Psoas muscle (tissue), 8 donors: ENCODE measurements at regions of chr2 and their contacts with region 1.

Region 1: DNA sequence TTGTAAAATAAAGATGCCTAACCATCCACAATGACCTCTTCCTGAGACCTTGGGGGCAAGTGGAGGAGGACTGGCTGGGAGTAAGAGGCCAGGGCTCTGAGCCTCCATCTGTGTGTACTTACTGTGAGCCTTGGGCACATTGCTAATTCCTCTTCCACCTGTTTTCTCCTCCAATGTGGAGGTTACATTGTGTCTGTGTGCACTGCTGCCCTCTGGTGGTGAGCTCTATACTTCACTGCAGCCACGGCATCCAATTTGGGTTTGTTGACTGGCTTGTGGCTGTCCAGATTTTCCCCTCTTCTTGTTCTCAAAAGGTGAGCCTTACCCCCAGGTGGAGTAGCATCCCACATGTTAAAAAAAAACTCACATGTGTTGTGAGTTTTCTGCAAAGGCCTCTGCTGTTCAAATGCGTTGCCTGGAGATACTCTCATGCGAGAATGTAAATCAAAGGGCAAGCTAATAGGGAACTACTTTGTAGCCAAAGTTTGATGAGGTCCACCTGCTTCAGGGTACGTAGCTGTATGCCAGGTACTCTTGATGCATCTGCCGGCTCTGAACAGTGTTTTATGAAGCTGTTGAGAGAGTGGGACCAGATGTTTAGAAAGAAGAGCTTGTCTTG is 80.8 kb downstream of the APOB start:
- DNase-seq: peak; percentile 66 to 76
- ATAC-seq: peak; percentile 82 to 92 (median 90)
- H3K4me3 ChIP-seq: no peak overlapping the region
- H3K27ac ChIP-seq: no peak overlapping the region
- H3K4me1 ChIP-seq: peaks cover 10% of the 10 kb centered on the region
- H3K27me3 ChIP-seq: peaks cover 0 to 2% (median 0%) of the 10 kb centered on the region in 3 donors
- CTCF ChIP-seq: peak; percentile 87

Region 2: DNA sequence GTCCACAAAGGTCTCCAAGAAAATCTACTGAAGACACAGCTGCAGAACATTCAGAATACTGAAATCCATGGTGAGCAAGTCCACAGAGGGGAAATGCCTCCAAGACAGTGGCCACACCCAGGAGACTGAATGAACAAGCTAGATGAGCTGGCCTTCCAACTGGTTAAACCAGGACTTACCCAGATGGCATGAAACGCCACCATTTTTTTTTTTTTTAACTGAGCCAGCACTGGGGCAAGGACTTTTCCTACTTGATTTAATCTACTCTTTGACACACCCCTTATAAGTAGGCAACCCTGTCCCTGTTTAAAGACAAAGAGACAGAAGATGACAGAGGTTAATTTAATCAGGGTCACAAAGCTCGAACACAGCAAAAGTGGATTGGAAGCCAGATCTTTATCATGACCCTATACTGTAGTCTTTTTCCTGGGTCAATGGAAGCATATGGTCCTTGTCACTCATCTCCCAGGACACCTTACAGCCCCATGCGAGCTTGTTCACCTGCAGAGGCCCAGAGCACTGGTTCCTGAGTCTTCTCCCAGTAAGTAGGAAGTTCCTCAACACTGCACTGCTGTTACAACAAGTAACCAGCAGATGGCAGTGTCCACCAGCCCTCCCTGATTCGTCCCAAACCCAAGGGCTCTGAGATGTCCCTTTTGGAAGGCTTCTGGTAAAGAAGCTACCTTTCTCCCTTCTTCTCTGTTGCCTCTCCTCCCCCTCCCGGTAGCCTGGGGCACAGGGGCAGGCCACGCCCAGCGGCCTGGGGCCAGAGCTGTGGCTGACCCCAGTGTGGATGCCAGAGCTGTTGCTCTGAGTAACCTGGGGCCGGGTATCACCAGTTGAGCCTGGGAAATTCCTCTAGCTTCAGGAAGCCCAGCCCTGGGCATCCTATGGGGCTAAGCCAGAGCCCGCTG is 301.7 kb before region 1 on chr2:
- intact Hi-C with region 1: loop called (anchors 1 to 2 kb)
- DNase-seq: peak; percentile 65 to 76
- ATAC-seq: peak; percentile 77 to 90 (median 84)
- H3K4me3 ChIP-seq: no peak overlapping the region
- H3K27ac ChIP-seq: no peak overlapping the region
- H3K4me1 ChIP-seq: peaks cover 4% of the 10 kb centered on the region
- H3K27me3 ChIP-seq: peaks cover 0 to 48% (median 25%) of the 10 kb centered on the region in 3 donors
- CTCF ChIP-seq: peak; percentile 98

Region 3: GRCh38 chr2:20781656-20782265 is 181.3 kb before region 1 on chr2:
- intact Hi-C with region 1: loop called (anchors 5 kb)
- DNase-seq: no peak
- ATAC-seq: no peak
- H3K4me3 ChIP-seq: no peak overlapping the region
- H3K27ac ChIP-seq: no peak overlapping the region
- H3K4me1 ChIP-seq: no peaks in the 10 kb centered on the region
- H3K27me3 ChIP-seq: no peaks in the 10 kb centered on the region
- CTCF ChIP-seq: peak; percentile 36

Region 4: DNA sequence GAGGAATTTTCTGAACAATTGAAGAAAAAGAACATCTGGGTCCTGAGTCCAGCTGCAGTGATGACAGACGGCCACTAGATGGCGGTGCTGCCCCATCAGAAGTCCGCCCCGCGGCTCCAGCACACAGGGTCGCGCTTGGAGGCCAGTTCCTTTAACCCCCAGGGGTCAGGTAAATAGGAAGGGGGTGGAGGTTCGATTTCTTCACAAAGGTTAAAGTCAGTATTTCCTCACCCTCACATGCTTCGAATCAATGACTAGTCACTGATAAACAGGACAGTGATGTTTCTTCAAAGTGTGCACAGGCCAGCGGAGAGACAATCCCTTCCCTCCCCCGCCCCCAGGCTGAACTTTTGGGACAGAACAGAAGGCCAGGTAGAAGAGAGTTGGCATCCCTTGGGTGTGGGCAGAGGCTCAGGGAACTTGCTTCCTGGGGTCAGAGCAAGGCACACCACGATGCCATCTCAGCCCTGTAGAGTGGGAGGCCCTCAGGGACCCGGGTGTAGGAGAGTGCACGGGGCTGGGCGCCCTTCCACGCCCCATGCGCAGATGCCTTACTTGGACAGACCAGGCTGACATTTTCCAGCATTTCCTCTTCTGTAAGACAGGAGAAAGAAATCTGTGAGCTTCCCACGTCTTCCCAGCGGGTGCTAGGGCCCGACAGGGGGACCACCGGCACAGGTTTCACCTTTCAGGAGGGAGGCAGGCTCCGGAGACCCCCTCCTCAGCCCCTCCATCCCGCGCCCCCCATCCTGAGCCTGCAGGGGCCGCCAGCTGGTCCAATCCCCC is 80.1 kb after region 1 on chr2:
- intact Hi-C with region 1: no loop called
- DNase-seq: peak; percentile 54 to 78
- ATAC-seq: peak; percentile 69 to 80 (median 78)
- H3K4me3 ChIP-seq: peak overlapping the region; percentile 51
- H3K27ac ChIP-seq: no peak overlapping the region
- H3K4me1 ChIP-seq: peaks cover 14% of the 10 kb centered on the region
- H3K27me3 ChIP-seq: peaks cover 0 to 12% (median 2%) of the 10 kb centered on the region in 3 donors
- CTCF ChIP-seq: peak; percentile 99